Right lobe of liver (tissue), 6 donors: ENCODE measurements at regions of chr12 and their contacts with region 1.

Region 1: DNA sequence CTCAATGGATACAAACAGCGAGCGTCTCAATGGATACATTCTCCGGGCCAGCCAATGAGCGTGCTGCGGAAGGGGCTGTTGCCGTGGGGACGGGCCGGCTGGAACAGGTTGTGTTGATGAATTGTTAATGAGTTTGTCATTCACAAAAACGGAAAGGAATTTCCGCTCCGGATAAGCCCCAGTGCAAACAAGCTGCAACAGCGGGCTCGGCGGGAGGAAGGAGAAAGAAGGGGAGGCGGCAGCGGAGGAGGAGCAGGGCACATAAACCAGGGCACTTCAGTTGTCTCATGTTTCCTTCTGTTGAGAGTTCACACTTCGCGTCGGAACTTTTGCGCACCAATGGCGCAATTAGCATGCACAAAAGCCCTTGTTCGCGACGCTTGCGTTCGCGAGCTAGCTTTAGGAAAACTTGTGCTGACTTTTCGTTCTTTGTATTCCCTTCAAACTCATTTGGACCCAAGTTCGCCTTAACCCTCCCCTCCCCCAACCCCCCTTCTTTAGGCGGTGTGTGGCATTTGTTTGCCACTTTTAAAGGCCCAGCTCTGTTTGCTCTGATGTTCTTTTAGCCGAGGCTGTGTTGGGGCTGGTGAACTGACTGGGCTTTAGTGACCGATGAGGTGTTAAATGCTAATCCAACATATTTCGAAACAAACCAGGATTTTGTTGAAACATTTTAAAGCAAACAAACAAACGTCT is at the start of gene DUSP6:
- DNase-seq: peak; percentile 97 to 98 (median 98)
- ATAC-seq: peak; percentile 59 to 76 (median 64)
- H3K4me3 ChIP-seq: peak within 1 kb of the TSS; percentile 87 to 88 (median 88)
- H3K27ac ChIP-seq: peak within 1 kb of the TSS; percentile 95 to 99 (median 98)
- H3K4me1 ChIP-seq: peaks cover 0 to 35% (median 15%) of the 10 kb centered on the region in 4 donors
- H3K27me3 ChIP-seq: no peaks in the 10 kb centered on the region
- CTCF ChIP-seq: no peak
- POLR2A ChIP-seq: peak; percentile 91
- total RNA-seq, gene DUSP6: 24.3 to 139 (median 50.4) TPM

Region 2: DNA sequence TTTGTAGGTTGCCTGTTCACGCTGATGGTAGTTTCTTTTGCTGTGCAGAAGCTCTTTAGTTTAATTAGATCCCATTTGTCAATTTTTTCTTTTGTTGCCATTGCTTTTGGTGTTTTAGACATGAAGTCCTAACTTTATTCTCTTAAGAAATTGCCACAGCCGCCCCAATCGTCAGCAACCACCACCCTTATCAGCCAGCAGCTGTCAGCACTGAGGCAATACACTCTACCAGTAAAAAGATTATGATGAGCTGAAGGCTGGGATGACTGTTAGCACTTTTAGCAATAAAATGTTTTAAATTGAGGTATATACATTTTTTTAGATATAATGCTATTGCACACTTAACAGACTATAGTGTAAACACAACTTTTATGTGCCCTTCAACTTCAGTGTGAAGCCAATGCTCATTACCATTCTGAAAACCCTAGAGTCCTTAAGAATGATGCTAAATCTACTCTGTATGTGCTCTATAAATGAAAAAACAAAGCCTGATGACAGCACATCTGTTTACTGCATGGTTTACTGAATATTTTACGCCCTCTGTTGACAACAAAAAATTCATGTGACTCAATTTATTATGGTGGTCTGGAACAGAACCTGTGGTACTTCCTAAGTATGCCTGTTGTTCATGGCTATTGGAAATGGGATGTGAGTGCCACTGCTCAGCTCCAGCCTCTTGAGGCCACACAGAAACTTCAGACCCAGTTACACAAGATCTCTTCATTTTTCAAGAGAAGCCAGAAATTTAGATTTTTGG is 197.7 kb before region 1 on chr12:
- intact Hi-C with region 1: no loop called
- DNase-seq: no peak
- ATAC-seq: no peak
- H3K4me3 ChIP-seq: no peak overlapping the region
- H3K27ac ChIP-seq: no peak overlapping the region
- H3K4me1 ChIP-seq: peaks cover 0 to 16% (median 5%) of the 10 kb centered on the region in 4 donors
- H3K27me3 ChIP-seq: no peaks in the 10 kb centered on the region
- CTCF ChIP-seq: peak in 2 of 4 donors; percentile 12 to 13
- POLR2A ChIP-seq: no peak

Region 3: DNA sequence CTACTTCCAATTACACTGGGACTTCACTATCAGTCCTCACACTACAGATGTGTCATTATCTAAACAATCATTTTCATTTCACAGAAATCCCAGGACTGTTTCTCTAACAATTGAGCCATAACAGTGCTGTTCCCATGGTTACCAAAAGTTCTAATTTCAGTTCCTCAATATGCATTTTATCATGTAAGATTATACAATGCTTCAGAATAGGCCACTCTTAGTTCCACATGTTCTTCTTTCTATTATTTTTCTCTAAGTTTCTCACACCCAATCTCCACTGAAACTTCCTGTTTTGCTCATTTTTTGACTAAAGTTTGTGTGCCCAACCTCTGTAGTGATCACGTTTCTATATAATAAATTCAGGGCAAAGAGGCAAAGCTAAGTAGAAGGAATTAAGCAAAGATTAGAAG is 186.1 kb before region 1 on chr12:
- intact Hi-C with region 1: loop called in 1 of 2 experiments (anchors 5 kb)
- DNase-seq: no peak
- ATAC-seq: peak in 3 of 4 donors; percentile 2 to 7 (median 6)
- H3K4me3 ChIP-seq: no peak overlapping the region
- H3K27ac ChIP-seq: peak overlapping the region in 1 of 3 donors; percentile 24
- H3K4me1 ChIP-seq: peaks cover 0 to 48% (median 20%) of the 10 kb centered on the region in 4 donors
- H3K27me3 ChIP-seq: no peaks in the 10 kb centered on the region
- CTCF ChIP-seq: no peak
- POLR2A ChIP-seq: no peak